Activated CD4-positive, alpha-beta memory T cell treated with anti-CD3 and anti-CD28 coated beads for 36 hours (primary cell): ENCODE measurements at regions of chr5 and their contacts with region 1.

Region 1: GRCh38 chr5:178626484-178627258 is at the start of gene CLK4:
- DNase-seq: peak; percentile 97
- H3K4me3 Mint-ChIP-seq: peak within 1 kb of the TSS; percentile 92
- H3K27ac Mint-ChIP-seq: peak within 1 kb of the TSS; percentile 98
- H3K4me1 Mint-ChIP-seq: peaks cover 28% of the 10 kb centered on the region
- H3K27me3 Mint-ChIP-seq: no peaks in the 10 kb centered on the region
- total RNA-seq, gene CLK4: 25.1 to 26.0 TPM

Region 2: GRCh38 chr5:178467568-178468195 is 159.0 kb before region 1 on chr5:
- CTCF ChIA-PET with region 1: no interaction called
- POLR2A ChIA-PET with region 1: no interaction called
- intact Hi-C with region 1: no loop called
- DNase-seq: no peak
- H3K4me3 Mint-ChIP-seq: no peak overlapping the region
- H3K27ac Mint-ChIP-seq: no peak overlapping the region
- H3K4me1 Mint-ChIP-seq: no peaks in the 10 kb centered on the region
- H3K27me3 Mint-ChIP-seq: peaks cover 11% of the 10 kb centered on the region

Region 3: DNA sequence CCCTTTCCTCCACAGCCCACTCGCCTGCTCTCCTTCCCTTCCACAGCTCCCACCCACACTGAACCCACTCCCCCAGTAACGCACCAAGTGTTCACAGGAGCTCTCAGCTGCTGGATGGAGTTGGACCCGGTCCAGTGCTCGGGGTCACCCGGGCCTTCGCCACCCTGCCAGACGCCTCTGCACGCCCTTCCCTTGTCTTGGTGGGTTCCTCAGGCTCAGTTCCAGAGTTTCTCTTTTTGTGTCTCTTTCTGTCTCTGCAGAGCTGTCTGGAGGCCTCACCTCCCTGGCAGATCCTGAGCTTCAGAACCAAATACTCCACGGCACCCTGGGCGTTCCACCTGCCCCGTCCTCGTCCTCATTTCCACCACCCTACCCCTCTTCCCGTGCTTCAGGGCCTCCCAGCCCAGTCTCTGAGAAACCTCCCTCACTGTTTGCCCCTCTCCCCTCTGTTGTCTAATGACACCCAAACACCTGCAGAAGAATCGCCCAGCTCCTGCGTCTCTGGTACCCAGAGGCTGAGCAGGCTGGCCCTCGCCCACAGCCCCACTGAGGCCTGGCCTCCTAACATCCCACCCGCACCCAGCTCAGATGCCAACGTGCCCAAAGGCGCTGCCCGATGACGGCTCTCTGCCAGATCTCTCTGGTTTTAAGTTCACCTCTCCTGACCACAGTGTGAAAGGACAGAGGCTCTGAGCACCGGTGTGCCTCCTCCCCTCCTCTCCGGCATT is 110.7 kb before region 1 on chr5:
- CTCF ChIA-PET with region 1: no interaction called
- POLR2A ChIA-PET with region 1: no interaction called
- intact Hi-C with region 1: no loop called
- DNase-seq: no peak
- H3K4me3 Mint-ChIP-seq: no peak overlapping the region
- H3K27ac Mint-ChIP-seq: no peak overlapping the region
- H3K4me1 Mint-ChIP-seq: no peaks in the 10 kb centered on the region
- H3K27me3 Mint-ChIP-seq: peaks cover 15% of the 10 kb centered on the region

Region 4: DNA sequence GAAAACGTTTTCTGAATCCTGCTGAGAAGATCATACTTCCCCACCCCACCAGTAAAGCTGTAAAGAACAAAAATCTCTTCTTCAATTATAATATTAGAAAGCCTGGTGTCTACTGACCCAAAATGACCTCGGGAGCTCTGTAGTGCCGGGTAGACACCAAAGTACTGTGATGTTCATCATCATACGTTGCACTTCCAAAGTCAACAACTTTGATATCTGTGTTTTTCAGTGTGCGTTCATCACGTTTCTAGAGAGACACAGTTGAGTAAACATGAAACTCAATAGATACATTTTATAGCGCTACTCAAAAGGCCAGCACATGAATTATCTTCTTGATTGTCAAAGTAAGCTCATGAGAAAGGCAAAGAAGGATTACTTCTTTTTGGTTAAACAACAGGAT is 14.4 kb before region 1 on chr5:
- CTCF ChIA-PET with region 1: no interaction called
- POLR2A ChIA-PET with region 1: interaction called, 4 read pairs
- intact Hi-C with region 1: loop called (anchors 1 kb)
- DNase-seq: no peak
- H3K4me3 Mint-ChIP-seq: no peak overlapping the region
- H3K27ac Mint-ChIP-seq: peak overlapping the region; percentile 42
- H3K4me1 Mint-ChIP-seq: peaks cover 14% of the 10 kb centered on the region
- H3K27me3 Mint-ChIP-seq: no peaks in the 10 kb centered on the region

Region 5: DNA sequence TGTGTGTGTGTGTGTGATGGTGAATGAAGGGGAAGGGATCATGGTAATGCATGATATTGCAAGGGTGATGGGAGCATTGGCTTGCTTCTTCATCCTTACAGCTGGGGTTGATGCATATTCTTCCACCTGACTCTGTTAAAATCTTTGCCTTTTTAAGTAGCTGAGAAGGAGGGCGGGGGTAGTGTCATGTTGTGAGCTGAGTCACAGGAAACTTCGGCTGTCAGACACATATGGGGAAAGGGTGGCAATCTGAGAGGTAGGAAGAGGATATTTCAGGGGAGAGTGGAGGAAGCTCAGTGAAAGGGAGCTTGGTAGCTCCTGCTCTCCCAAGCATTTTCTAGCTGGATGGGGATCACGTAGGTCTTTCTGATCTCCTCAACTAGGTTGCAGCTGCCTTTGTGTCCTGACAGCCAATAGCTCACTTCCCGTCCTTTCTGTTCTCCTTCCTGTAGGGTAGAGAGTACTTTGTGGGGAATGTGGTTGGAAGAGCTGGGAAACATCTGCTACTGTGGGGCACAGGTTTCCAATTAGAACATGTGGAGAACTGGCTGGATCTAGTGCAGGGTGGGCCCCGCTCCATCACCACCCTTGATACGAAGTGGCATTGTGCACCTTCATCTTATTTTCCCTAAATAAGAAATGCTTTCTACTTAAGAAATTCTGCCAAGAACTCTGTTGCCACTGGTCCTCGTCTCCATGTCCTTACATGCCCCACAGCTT is 18.3 kb after region 1 on chr5:
- CTCF ChIA-PET with region 1: no interaction called
- POLR2A ChIA-PET with region 1: no interaction called
- intact Hi-C with region 1: no loop called
- DNase-seq: no peak
- H3K4me3 Mint-ChIP-seq: no peak overlapping the region
- H3K27ac Mint-ChIP-seq: no peak overlapping the region
- H3K4me1 Mint-ChIP-seq: no peaks in the 10 kb centered on the region
- H3K27me3 Mint-ChIP-seq: peaks cover 8% of the 10 kb centered on the region

Region 6: DNA sequence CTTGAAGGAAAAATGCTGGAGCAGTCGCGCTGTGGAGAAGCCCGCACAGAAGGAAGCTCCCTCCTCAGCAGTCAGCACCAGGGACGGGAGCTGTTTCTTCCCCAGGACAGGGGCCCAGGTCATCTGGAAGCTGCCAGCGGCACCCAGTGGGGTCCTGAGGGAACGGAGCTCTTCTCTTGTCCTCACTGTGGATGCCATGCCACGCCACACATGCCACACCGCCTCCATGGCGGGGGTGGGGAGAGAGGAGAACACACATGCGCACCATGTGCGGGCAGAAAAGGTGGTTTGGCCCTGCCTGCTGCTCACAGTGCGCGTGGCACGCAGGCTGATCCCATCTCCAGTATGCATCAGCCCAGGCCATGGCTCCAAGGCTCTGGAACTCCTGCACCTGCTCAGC is 191.4 kb after region 1 on chr5:
- CTCF ChIA-PET with region 1: no interaction called
- POLR2A ChIA-PET with region 1: no interaction called
- intact Hi-C with region 1: no loop called
- DNase-seq: no peak
- H3K4me3 Mint-ChIP-seq: no peak overlapping the region
- H3K27ac Mint-ChIP-seq: no peak overlapping the region
- H3K4me1 Mint-ChIP-seq: no peaks in the 10 kb centered on the region
- H3K27me3 Mint-ChIP-seq: peaks cover 6% of the 10 kb centered on the region